WTC11 (cell line): ENCODE measurements at regions of chr1 and their contacts with region 1.

Region 1: DNA sequence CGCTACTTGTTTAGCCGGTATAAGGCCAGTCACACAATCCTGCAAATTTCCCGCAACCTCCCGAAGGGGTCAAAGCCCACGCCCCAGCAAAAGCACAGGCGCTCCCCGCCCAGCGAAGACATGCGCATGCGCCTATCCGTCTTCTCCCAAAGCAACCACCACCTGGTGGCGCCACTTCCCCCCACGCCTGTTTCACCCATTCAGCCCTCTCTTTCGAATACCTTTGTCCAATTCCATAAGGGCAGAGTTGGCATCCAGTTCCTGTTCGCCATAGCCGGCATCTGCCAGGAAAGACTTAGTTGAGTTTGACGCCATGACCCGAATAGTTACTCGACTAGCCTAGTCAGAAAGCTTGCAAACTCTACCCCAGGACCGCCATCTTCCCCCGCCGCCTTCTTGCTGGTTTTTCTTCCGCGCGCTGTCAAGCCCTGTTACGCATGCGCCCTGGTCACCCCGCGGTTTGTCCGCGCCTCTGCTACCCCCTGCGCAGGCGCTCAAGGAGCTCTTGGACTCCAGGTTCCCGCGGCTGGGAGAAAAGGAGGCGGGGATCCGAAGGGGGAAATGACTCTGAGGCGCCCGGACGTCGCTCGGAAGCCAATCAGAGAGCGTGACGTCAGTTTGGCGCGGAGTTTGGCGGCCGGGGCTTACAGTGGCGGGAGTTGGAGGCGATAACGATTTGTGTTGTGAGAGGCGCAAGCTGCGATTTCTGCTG is at the starts of genes DTL and INTS7:
- DNase-seq: peak; percentile 98
- ATAC-seq: peak; percentile 92
- H3K4me3 Mint-ChIP-seq: peak within 1 kb of the TSS; percentile 98
- H3K27ac Mint-ChIP-seq: peak within 1 kb of the TSS; percentile 99
- H3K4me1 Mint-ChIP-seq: peaks cover 32% of the 10 kb centered on the region
- H3K27me3 Mint-ChIP-seq: peaks cover 3% of the 10 kb centered on the region; the same call in 1 of the 2 replicates
- CTCF ChIP-seq: peak; percentile 66; the same call in 1 of the 2 replicates
- total RNA-seq, gene DTL: 38.8 to 52.3 TPM (median 43.0 TPM) in 3 replicates
- total RNA-seq, gene INTS7: 16.3 to 17.3 TPM (median 17.2 TPM) in 3 replicates

Region 2: GRCh38 chr1:211698161-211699026 is 336.9 kb before region 1 on chr1:
- CTCF ChIA-PET with region 1: interaction called, 58 read pairs
- POLR2A ChIA-PET with region 1: interaction called, 6 read pairs
- DNase-seq: peak; percentile 91
- ATAC-seq: peak; percentile 95
- H3K4me3 Mint-ChIP-seq: peak overlapping the region; percentile 80
- H3K27ac Mint-ChIP-seq: no peak overlapping the region
- H3K4me1 Mint-ChIP-seq: peaks cover 4% of the 10 kb centered on the region; the same call in 1 of the 2 replicates
- H3K27me3 Mint-ChIP-seq: peaks cover 31% of the 10 kb centered on the region
- CTCF ChIP-seq: peak; percentile 99

Region 3: GRCh38 chr1:211991695-211992094 is 43.6 kb before region 1 on chr1:
- CTCF ChIA-PET with region 1: interaction called, 10 read pairs
- POLR2A ChIA-PET with region 1: interaction called, 3 read pairs
- DNase-seq: no peak
- ATAC-seq: no peak
- H3K4me3 Mint-ChIP-seq: no peak overlapping the region
- H3K27ac Mint-ChIP-seq: no peak overlapping the region
- H3K4me1 Mint-ChIP-seq: peaks cover 3% of the 10 kb centered on the region
- H3K27me3 Mint-ChIP-seq: no peaks in the 10 kb centered on the region
- CTCF ChIP-seq: no peak

Region 4: GRCh38 chr1:212070720-212071302 is 35.5 kb after region 1 on chr1:
- CTCF ChIA-PET with region 1: interaction called, 12 read pairs
- POLR2A ChIA-PET with region 1: interaction called, 3 read pairs
- DNase-seq: no peak
- ATAC-seq: peak; percentile 24; the same call in 1 of the 2 replicates
- H3K4me3 Mint-ChIP-seq: no peak overlapping the region
- H3K27ac Mint-ChIP-seq: peak overlapping the region; percentile 57; the same call in 1 of the 2 replicates
- H3K4me1 Mint-ChIP-seq: no peaks in the 10 kb centered on the region
- H3K27me3 Mint-ChIP-seq: no peaks in the 10 kb centered on the region
- CTCF ChIP-seq: no peak

Region 5: GRCh38 chr1:212205843-212206242 is 170.6 kb after region 1 on chr1:
- CTCF ChIA-PET with region 1: no interaction called
- POLR2A ChIA-PET with region 1: no interaction called
- DNase-seq: no peak
- ATAC-seq: no peak
- H3K4me3 Mint-ChIP-seq: no peak overlapping the region
- H3K27ac Mint-ChIP-seq: no peak overlapping the region
- H3K4me1 Mint-ChIP-seq: peaks cover 14% of the 10 kb centered on the region
- H3K27me3 Mint-ChIP-seq: no peaks in the 10 kb centered on the region
- CTCF ChIP-seq: no peak

Region 6: GRCh38 chr1:212311846-212312497 is 276.7 kb after region 1 on chr1:
- CTCF ChIA-PET with region 1: interaction called, 12 read pairs
- POLR2A ChIA-PET with region 1: no interaction called
- DNase-seq: no peak
- ATAC-seq: no peak
- H3K4me3 Mint-ChIP-seq: no peak overlapping the region
- H3K27ac Mint-ChIP-seq: no peak overlapping the region
- H3K4me1 Mint-ChIP-seq: peaks cover 44% of the 10 kb centered on the region
- H3K27me3 Mint-ChIP-seq: no peaks in the 10 kb centered on the region
- CTCF ChIP-seq: no peak